ENCODE measurements at regions of chr3 and their contacts with region 1.

Region 1: DNA sequence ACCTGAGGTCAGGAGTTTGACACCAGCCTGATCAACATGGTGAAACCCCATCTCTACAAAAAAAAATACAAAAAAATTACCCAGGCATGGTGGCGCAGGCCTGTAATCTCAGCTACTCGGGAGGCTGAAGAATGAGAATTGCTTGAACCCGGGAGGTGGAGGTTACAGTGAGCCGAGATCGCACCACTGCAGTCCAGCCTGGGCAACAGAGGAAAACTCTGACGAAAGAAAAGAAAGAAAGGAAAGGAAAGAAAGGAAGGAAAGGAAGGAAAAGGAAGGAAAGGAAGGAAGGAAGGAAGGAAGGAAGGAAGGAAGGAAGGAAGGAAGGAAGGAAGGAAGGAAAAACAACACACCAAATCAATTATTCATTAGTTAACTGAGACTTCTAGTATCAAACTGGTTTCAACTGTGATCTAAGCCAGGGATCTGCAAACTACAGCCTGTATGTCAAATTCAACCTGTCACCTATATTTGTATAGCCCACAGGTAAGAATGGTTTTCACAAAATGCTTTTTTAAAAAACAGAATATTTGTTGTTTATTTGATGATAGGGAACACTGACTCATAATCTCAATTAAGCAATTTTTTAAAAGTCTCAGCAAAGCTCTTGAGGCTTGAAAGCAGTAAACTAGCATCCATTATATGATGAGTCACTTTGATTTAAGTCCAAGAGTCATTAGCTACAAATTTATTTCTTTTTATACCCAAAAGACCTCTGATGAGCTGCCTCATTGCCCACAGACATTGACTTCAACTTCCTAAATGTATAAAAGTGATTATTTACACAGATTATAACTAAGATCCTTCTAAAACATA is 127.6 kb downstream of the TBL1XR1 start:
- H3K4me3 ChIP-seq: no peak overlapping the region
- H3K27ac ChIP-seq: no peak overlapping the region
- H3K4me1 ChIP-seq: no peaks in the 10 kb centered on the region
- CTCF ChIP-seq: no peak

Region 2: GRCh38 chr3:176927706-176928581 is 141.8 kb before region 1 on chr3:
- CTCF ChIA-PET with region 1: no interaction called
- POLR2A ChIA-PET with region 1: no interaction called
- H3K4me3 ChIP-seq: no peak overlapping the region
- H3K27ac ChIP-seq: no peak overlapping the region
- H3K4me1 ChIP-seq: no peaks in the 10 kb centered on the region
- CTCF ChIP-seq: no peak

Region 3: DNA sequence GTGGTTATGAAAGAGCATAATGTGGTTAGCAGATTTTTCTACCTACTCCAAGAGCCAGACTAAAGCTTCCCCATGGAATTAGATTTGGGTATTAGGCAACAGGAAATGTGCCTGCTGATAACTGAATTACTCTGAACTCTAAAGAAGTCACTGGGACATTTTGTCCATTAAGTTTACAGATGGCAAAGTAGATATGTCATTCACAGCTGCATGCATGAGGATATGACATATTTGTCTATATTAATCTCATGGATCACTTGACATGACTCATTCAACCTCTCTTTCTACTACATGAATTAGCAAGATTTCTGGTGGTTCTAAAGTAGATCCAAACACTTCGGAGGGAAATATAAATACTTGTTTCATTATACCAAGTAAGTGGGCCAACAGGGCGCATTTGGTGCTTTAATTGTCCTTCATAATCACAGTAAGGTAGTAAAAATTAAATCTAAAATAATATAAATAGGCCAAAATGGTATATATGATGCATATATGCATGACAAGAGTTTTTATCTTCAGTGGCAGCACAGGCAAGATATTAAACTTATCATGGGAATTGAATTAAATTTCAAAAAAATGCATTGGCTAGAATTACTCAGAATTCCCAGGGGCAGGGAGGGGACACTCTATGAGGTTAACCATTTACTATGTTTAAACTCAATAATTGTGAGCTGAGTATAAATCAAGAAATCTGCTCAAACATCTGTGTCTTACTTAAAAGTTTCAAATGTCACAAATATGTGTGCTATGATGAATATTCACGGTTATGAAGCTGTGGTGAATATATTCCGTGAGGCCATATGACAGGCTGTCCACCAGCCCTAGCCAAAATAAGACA is 1101.2 kb after region 1 on chr3:
- CTCF ChIA-PET with region 1: interaction called, 10 read pairs
- POLR2A ChIA-PET with region 1: no interaction called
- H3K4me3 ChIP-seq: no peak overlapping the region
- H3K27ac ChIP-seq: no peak overlapping the region
- H3K4me1 ChIP-seq: no peaks in the 10 kb centered on the region
- CTCF ChIP-seq: no peak

Measured in HEK293 (cell line).